Body of pancreas (tissue), 4 donors: ENCODE measurements at regions of chrX and their contacts with region 1.

Region 1: DNA sequence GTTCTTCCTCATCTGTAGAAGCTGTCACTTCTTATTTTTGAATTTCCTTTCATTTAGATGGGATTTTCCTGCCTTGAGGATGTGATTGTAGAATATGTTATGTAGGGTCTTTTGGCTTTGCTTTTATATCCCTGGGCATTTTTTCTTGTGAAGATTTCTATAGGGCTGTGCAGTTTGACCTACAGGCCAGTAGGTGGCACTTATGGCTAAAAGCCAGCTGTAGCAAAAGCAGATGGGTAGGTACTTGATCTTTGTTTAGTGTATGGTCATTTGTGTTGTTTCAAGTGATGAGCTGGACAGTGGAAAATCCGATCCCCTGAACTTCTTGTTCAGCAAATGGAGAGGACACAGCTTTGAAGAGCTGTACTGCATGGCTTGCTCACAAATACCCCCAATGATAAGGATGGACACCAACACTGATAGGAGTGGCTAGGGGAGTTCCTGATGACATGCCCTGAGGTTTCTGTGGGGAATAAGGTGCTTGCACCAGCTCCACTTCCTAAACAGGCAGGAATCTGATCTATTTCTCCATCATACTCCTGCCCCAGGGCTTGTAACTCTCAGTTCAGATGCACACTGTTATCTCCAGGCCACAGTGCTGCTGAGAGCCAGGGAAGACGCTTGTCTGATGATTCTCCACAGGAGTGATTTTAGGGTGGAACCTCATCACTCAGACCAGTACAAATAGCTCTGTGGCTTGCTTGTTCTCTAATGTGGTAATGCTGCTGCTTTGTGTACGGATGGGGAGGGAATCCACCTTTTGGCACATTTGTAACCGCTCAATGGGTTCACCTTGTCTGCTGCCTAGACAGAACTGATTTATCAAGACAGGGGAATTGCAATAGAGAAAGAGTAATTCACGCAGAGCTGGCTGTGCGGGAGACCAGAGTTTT is 417.1 kb upstream of the MAGEB16 start:
- DNase-seq: peak; percentile 10 to 44 (median 26)
- ATAC-seq: no peak
- H3K4me3 ChIP-seq: no peak overlapping the region
- H3K27ac ChIP-seq: no peak overlapping the region
- H3K4me1 ChIP-seq: no peaks in the 10 kb centered on the region
- H3K27me3 ChIP-seq: no peaks in the 10 kb centered on the region
- CTCF ChIP-seq: peak; percentile 44 to 77 (median 59)
- POLR2A ChIP-seq: no peak

Region 2: GRCh38 chrX:34978171-34978570 is 402.9 kb before region 1 on chrX:
- intact Hi-C with region 1: no loop called
- DNase-seq: peak in 1 of 4 donors; percentile 10
- ATAC-seq: no peak
- H3K4me3 ChIP-seq: no peak overlapping the region
- H3K27ac ChIP-seq: no peak overlapping the region
- H3K4me1 ChIP-seq: no peaks in the 10 kb centered on the region
- H3K27me3 ChIP-seq: no peaks in the 10 kb centered on the region
- CTCF ChIP-seq: no peak
- POLR2A ChIP-seq: no peak

Region 3: GRCh38 chrX:35445912-35446311 is 64.9 kb after region 1 on chrX:
- intact Hi-C with region 1: no loop called
- DNase-seq: no peak
- ATAC-seq: peak; percentile 40
- H3K4me3 ChIP-seq: no peak overlapping the region
- H3K27ac ChIP-seq: no peak overlapping the region
- H3K4me1 ChIP-seq: peaks cover 19% of the 10 kb centered on the region
- H3K27me3 ChIP-seq: no peaks in the 10 kb centered on the region
- CTCF ChIP-seq: no peak
- POLR2A ChIP-seq: no peak

Region 4: DNA sequence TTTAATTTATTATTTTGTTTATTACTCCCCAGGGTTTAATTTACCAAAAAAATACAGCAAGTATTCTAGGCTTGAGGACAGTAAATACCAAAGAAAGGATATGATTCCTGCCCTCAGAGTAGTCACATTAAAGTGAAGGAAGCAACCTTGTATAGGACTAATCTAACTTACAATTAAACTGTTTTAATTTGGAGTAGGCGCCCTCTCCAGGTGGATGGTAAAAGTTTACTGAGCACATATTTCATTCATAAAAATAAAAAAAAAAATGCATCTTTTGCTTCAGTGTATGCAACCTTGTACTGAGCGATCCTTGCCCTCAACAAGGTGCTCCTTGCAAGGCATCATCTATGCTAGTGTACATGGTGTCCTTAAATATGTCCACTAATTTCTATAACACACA is 345.1 kb after region 1 on chrX:
- intact Hi-C with region 1: loop called (anchors 10 kb)
- DNase-seq: peak in 3 of 4 donors; percentile 17 to 47 (median 40)
- ATAC-seq: no peak
- H3K4me3 ChIP-seq: no peak overlapping the region
- H3K27ac ChIP-seq: no peak overlapping the region
- H3K4me1 ChIP-seq: no peaks in the 10 kb centered on the region
- H3K27me3 ChIP-seq: no peaks in the 10 kb centered on the region
- CTCF ChIP-seq: peak in 6 of 7 experiments; percentile 9 to 43 (median 28)
- POLR2A ChIP-seq: no peak

Region 5: DNA sequence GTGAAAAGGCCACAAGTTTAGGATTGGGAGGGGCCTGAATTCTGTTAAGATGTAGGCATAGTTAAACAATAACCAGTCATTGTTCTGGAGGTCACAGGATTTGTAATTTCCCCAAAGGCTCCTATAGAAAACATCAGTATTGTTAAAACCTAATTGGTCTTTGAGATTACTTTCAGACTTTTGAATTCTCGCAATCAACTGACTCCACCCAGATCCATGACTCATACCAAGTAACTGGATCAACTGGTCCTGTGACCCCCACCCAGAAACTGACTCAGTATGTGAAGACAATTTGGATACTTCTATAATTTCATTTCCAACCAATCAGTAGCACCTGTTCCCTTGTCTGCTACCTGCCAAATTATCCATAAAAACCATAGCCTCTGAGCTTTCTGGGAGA is 445.4 kb after region 1 on chrX:
- intact Hi-C with region 1: no loop called
- DNase-seq: no peak
- ATAC-seq: no peak
- H3K4me3 ChIP-seq: no peak overlapping the region
- H3K27ac ChIP-seq: no peak overlapping the region
- H3K4me1 ChIP-seq: no peaks in the 10 kb centered on the region
- H3K27me3 ChIP-seq: no peaks in the 10 kb centered on the region
- CTCF ChIP-seq: no peak
- POLR2A ChIP-seq: no peak